Ovary (tissue), 10 donors: ENCODE measurements at regions of chr6 and their contacts with region 1.

Region 1: GRCh38 chr6:34757687-34758274 is 476 bp downstream of the SNRPC start:
- DNase-seq: no peak
- H3K4me3 ChIP-seq: peak overlapping the region; percentile 84
- H3K27ac ChIP-seq: peak overlapping the region in 1 of 2 donors; percentile 95
- H3K4me1 ChIP-seq: peaks cover 5% of the 10 kb centered on the region
- H3K27me3 ChIP-seq: no peaks in the 10 kb centered on the region
- CTCF ChIP-seq: no peak
- EP300 ChIP-seq: no peak
- POLR2A ChIP-seq: no peak

Region 2: GRCh38 chr6:34696739-34697543 is 60.8 kb before region 1 on chr6 and contains the start of gene ILRUN:
- intact Hi-C with region 1: loop called in 1 of 4 experiments (anchors 5 kb)
- DNase-seq: peak; percentile 97 to 99 (median 98)
- H3K4me3 ChIP-seq: peak within 1 kb of the TSS; percentile 68
- H3K27ac ChIP-seq: peak within 1 kb of the TSS; percentile 66 to 87
- H3K4me1 ChIP-seq: peaks cover 13% of the 10 kb centered on the region
- H3K27me3 ChIP-seq: no peaks in the 10 kb centered on the region
- CTCF ChIP-seq: no peak
- EP300 ChIP-seq: peak; percentile 8
- POLR2A ChIP-seq: peak; percentile 88
- total RNA-seq, gene ILRUN: 29.4 to 59.8 (median 47.6) TPM

Region 3: DNA sequence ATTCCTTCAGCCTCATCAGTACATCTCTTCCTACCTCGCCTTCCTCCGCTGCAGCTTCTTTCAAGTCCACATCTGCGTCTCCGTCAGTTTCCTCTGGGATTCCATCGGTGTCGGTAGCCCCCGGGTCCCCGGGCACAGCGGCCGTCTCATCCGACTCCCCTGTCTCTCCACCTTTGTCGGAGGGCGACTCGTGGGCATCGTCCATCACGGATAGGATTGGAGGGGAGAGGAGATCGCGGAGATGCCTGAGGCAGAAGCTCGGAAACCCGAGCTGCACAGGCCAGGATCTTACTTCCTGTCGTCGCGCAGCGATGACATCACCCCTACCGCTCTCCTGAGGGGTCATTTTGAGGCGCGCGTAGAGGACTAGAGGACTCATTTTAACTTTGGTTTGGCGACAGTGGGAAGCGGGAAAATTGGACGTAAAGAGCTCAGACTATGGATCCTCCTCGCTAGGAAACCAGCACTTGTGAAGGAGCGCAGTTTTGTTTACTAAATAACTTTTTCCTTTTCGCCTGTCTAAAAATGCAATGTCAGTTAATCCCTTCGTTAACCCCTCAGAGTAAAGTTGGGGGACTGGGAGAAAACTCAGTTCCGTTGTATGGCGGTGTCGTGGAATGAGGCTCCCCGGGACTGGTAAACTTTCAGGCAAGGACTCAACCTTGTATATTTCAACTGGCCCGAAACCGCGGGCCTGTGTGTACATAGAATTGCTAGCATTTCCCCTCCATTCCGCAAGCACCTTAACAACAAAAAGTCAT is 130.2 kb after region 1 on chr6 and contains the start of gene TAF11:
- intact Hi-C with region 1: loop called in 1 of 4 experiments (anchors 5 kb)
- DNase-seq: peak; percentile 92 to 95 (median 93)
- H3K4me3 ChIP-seq: peak within 1 kb of the TSS; percentile 88
- H3K27ac ChIP-seq: peak within 1 kb of the TSS; percentile 75 to 79
- H3K4me1 ChIP-seq: peaks cover 5% of the 10 kb centered on the region
- H3K27me3 ChIP-seq: no peaks in the 10 kb centered on the region
- CTCF ChIP-seq: no peak
- EP300 ChIP-seq: no peak
- POLR2A ChIP-seq: peak; percentile 83
- total RNA-seq, gene TAF11: 16.0 to 25.0 (median 19.1) TPM